SK-N-SH (cell line): ENCODE measurements at regions of chr17 and their contacts with region 1.

Region 1: GRCh38 chr17:56819431-56820145 is 14.1 kb downstream of the C17orf67 start:
- DNase-seq: peak; percentile 87
- H3K4me3 ChIP-seq: no peak overlapping the region; a peak in 1 of 4 replicates
- H3K27ac ChIP-seq: no peak overlapping the region
- H3K4me1 ChIP-seq: peaks cover 5 to 6% of the 10 kb centered on the region in 2 experiments; a peak in 2 of 4 replicates
- H3K27me3 ChIP-seq: no peaks in the 10 kb centered on the region
- CTCF ChIP-seq: peak; percentile 95
- EP300 ChIP-seq: no peak
- RAD21 ChIP-seq: peak; percentile 88

Region 2: DNA sequence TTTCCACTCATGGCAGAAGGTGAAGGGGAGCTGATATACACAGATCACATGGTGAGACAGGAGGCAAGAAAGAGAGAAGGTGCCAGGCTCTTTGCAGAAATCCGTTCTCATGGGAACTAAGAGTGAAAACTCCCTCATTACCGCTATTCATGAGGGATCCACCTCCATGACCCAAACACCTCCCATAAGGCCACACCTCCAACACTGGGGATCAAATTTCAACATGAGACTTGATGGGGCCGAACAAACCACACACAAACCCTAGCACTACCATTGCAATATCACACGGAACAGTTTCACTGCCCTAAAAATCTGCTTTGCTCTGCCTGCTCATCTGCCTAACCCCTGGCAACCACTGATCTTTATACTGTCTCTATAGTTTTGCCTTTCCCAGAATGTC is 20.7 kb before region 1 on chr17:
- CTCF ChIA-PET with region 1: interaction called, 14 read pairs
- POLR2A ChIA-PET with region 1: no interaction called
- DNase-seq: no peak
- H3K4me3 ChIP-seq: no peak overlapping the region
- H3K27ac ChIP-seq: no peak overlapping the region
- H3K4me1 ChIP-seq: no peaks in the 10 kb centered on the region
- H3K27me3 ChIP-seq: no peaks in the 10 kb centered on the region
- CTCF ChIP-seq: no peak
- EP300 ChIP-seq: no peak
- RAD21 ChIP-seq: no peak

Region 3: DNA sequence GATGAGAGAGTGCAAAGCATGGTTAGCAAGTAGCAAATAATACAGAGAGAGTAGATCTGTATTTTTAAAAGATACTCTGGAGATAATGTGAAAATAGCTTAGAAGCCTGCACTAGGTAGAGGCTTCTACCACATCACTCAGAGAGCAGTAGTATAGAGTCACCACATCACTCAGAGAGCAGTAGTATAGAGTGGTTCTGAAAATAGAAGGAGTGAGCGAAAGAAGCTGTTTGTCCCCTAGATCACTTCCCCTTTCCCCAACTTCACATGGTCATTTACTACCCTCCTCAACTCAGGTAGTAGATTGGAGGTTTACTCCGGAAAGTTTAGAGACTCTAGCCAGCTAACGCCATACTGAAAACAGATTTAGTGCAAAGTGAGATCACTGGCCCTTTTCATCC is 31.4 kb after region 1 on chr17:
- CTCF ChIA-PET with region 1: interaction called, 28 read pairs
- POLR2A ChIA-PET with region 1: no interaction called
- DNase-seq: no peak
- H3K4me3 ChIP-seq: no peak overlapping the region
- H3K27ac ChIP-seq: no peak overlapping the region
- H3K4me1 ChIP-seq: no peaks in the 10 kb centered on the region
- H3K27me3 ChIP-seq: no peaks in the 10 kb centered on the region
- CTCF ChIP-seq: no peak
- EP300 ChIP-seq: no peak
- RAD21 ChIP-seq: no peak

Region 4: DNA sequence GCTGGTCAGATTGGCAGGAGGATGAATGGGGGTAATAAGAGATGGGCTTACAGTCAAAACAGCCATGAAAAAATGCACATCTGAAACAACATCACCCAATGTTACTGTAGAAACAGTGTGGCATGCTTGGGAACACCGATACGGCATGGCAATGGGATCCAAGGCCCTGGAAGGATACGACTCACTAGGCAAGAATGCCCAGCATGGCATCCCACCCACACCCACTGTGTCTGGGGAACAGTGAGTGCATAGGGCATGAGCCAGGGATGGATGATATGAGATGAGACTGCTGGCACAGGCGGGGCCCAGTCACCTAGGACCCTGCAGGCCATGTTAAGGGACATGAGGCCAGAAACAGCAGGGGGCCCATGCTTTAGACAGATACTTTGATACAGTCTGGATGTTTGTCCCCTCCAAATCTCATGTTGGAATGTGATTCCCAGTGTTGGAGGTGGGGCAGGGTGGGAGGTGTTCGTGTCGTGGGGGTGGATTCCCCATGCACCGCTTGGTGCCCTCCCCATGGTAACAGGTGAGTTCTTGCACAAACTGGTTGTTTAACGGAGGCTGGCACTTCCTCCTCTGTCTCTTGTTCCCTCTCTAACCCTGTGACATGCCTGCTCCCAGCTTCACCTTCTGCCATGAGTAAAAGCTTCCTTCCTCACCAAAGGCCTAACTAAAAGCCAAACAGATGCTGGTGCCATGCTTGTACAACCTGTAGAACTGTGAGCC is 82.9 kb after region 1 on chr17:
- CTCF ChIA-PET with region 1: interaction called, 13 read pairs
- POLR2A ChIA-PET with region 1: no interaction called
- DNase-seq: no peak
- H3K4me3 ChIP-seq: no peak overlapping the region
- H3K27ac ChIP-seq: peak overlapping the region in 1 of 2 experiments; percentile 71; a peak in 2 of 4 replicates
- H3K4me1 ChIP-seq: peaks cover 0 to 9% of the 10 kb centered on the region in 2 experiments; a peak in 2 of 4 replicates
- H3K27me3 ChIP-seq: no peaks in the 10 kb centered on the region
- CTCF ChIP-seq: no peak
- EP300 ChIP-seq: no peak; a peak in 1 of 4 replicates
- RAD21 ChIP-seq: no peak

Region 5: GRCh38 chr17:56939901-56940343 is 120.3 kb after region 1 on chr17:
- CTCF ChIA-PET with region 1: interaction called, 251 read pairs
- POLR2A ChIA-PET with region 1: no interaction called
- DNase-seq: peak; percentile 79
- H3K4me3 ChIP-seq: no peak overlapping the region; a peak in 1 of 4 replicates
- H3K27ac ChIP-seq: no peak overlapping the region
- H3K4me1 ChIP-seq: peaks cover 0 to 10% of the 10 kb centered on the region in 2 experiments; a peak in 1 of 4 replicates
- H3K27me3 ChIP-seq: no peaks in the 10 kb centered on the region
- CTCF ChIP-seq: peak; percentile 94
- EP300 ChIP-seq: no peak
- RAD21 ChIP-seq: peak; percentile 91

Region 6: DNA sequence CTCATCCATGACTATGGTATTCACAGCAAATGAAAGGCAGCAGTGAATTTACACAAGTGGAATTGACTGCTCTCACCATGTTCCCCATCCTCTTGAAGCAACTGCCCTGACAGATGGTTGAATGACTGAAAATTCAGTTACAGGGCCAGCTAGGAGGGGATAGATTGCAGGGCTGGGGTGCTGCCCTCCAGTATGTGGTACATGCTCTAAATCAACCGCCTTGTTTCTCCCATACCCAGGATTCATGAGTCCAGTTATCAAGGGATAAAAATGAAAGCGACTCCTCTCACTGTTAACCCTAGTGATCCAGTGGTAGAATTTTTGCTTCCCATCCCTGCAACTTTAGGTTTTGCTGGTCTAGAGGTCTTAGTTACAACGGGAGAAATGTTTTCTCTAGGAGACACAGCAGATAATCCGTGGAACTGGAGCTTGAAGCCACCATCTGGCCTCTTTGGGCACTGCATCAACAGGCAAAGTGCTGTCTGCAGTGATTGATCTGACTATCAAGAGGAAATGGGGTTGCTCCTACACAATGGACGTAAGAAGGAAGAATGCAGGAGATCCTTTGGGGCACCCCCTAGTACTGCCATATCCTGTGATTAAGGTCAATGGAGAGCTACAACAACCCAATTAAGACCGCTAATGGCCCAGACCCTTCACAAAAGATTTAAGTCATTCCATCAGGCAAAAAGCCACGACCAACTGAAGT is 190.3 kb after region 1 on chr17:
- CTCF ChIA-PET with region 1: interaction called, 16 read pairs
- POLR2A ChIA-PET with region 1: no interaction called
- DNase-seq: peak; percentile 76
- H3K4me3 ChIP-seq: 0 out of 4 replicates have a peak overlapping the region, but pooled peaks of 1 of the 2 experiments have one; percentile 20
- H3K27ac ChIP-seq: no peak overlapping the region
- H3K4me1 ChIP-seq: peaks cover 0 to 5% of the 10 kb centered on the region in 2 experiments; a peak in 1 of 4 replicates
- H3K27me3 ChIP-seq: no peaks in the 10 kb centered on the region
- CTCF ChIP-seq: peak; percentile 76
- EP300 ChIP-seq: no peak
- RAD21 ChIP-seq: peak; percentile 76